ENCODE measurements at regions of chr15 and their contacts with region 1.

Region 1: GRCh38 chr15:74489518-74490338 is 28.8 kb upstream of the UBL7 start:
- DNase-seq: no peak
- H3K4me3 ChIP-seq: no peak overlapping the region
- H3K27ac ChIP-seq: no peak overlapping the region
- H3K4me1 ChIP-seq: no peaks in the 10 kb centered on the region
- H3K27me3 ChIP-seq: no peaks in the 10 kb centered on the region
- CTCF ChIP-seq: peak in 2 of 3 experiments; percentile 10 to 52
- POLR2A ChIP-seq: no peak

Region 2: GRCh38 chr15:74240002-74240568 is 249.6 kb before region 1 on chr15:
- intact Hi-C with region 1: no loop called
- DNase-seq: no peak
- H3K4me3 ChIP-seq: no peak overlapping the region
- H3K27ac ChIP-seq: no peak overlapping the region
- H3K4me1 ChIP-seq: peaks cover 18% of the 10 kb centered on the region
- H3K27me3 ChIP-seq: no peaks in the 10 kb centered on the region
- CTCF ChIP-seq: no peak
- POLR2A ChIP-seq: no peak

Region 3: GRCh38 chr15:74373731-74374647 is 115.7 kb before region 1 on chr15:
- intact Hi-C with region 1: loop called (anchors 5 kb)
- DNase-seq: no peak
- H3K4me3 ChIP-seq: peak overlapping the region; percentile 55 to 71
- H3K27ac ChIP-seq: no peak overlapping the region
- H3K4me1 ChIP-seq: peaks cover 16% of the 10 kb centered on the region
- H3K27me3 ChIP-seq: no peaks in the 10 kb centered on the region
- CTCF ChIP-seq: peak; percentile 76 to 87 (median 84)
- POLR2A ChIP-seq: no peak

Region 4: GRCh38 chr15:74816808-74817674 is 327.3 kb after region 1 on chr15:
- intact Hi-C with region 1: no loop called
- DNase-seq: no peak
- H3K4me3 ChIP-seq: no peak overlapping the region
- H3K27ac ChIP-seq: peak overlapping the region; percentile 16
- H3K4me1 ChIP-seq: peaks cover 28% of the 10 kb centered on the region
- H3K27me3 ChIP-seq: no peaks in the 10 kb centered on the region
- CTCF ChIP-seq: no peak
- POLR2A ChIP-seq: no peak